ENCODE measurements at regions of chr3 and their contacts with region 1.

Region 1: DNA sequence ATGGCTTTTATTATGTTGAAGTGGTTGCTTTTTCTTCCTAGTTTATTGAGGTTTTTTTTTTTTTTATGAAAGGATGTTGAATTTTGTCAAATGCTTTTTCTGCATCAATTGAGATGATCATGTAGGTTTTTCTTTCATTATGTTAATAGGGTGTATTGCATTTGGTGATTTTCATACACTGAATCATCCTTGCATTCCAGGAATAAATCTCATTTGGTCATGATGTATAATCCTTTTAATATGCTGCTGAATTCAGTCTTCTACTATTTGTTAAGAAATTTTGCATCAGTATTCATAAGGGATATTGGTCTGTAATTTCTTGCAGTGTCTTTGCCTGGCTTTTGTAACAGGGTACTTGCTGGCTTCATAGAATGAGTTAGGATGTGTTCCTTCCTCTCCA is 11.5 kb upstream of the CLRN1 start:
- DNase-seq: no peak
- H3K4me3 ChIP-seq: no peak overlapping the region
- H3K27ac ChIP-seq: no peak overlapping the region
- H3K4me1 ChIP-seq: no peaks in the 10 kb centered on the region
- H3K27me3 ChIP-seq: no peaks in the 10 kb centered on the region
- CTCF ChIP-seq: no peak

Region 2: GRCh38 chr3:150913133-150913922 is 70.7 kb before region 1 on chr3:
- CTCF ChIA-PET with region 1: interaction called, 15 read pairs
- POLR2A ChIA-PET with region 1: no interaction called
- intact Hi-C with region 1: no loop called
- DNase-seq: no peak
- H3K4me3 ChIP-seq: no peak overlapping the region
- H3K27ac ChIP-seq: no peak overlapping the region
- H3K4me1 ChIP-seq: no peaks in the 10 kb centered on the region
- H3K27me3 ChIP-seq: peaks cover 17% of the 10 kb centered on the region; the same call in 1 of the 2 replicates
- CTCF ChIP-seq: no peak

Region 3: DNA sequence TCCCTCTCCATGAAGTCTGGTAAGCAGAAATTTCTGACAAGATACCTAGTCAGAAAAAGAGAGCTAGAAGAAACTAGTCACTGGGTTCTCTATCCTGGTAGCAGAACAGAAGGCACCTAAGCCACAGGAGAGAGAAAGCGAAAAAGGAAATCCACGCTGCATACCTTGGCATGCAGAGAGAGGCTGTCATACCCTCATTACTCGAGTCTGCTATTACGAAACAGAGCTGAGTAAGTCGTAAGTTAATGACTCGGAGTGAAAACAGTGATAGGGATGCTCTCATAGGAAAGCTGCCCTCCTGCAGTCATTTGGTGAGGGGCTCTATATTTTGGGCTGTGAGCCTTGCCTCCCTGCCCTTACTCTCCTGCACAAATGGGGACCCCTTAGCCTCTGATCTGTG is 27.7 kb before region 1 on chr3:
- CTCF ChIA-PET with region 1: no interaction called
- POLR2A ChIA-PET with region 1: no interaction called
- intact Hi-C with region 1: no loop called
- DNase-seq: peak in 1 of 2 experiments; percentile 59
- H3K4me3 ChIP-seq: no peak overlapping the region
- H3K27ac ChIP-seq: no peak overlapping the region
- H3K4me1 ChIP-seq: no peaks in the 10 kb centered on the region
- H3K27me3 ChIP-seq: no peaks in the 10 kb centered on the region
- CTCF ChIP-seq: no peak

Measured in PC-9 (cell line).